Right lobe of liver (tissue), 6 donors: ENCODE measurements at regions of chr16 and their contacts with region 1.

Region 1: GRCh38 chr16:11263737-11264136 is 5.4 kb downstream of the TNP2 start:
- DNase-seq: no peak
- ATAC-seq: no peak
- H3K4me3 ChIP-seq: no peak overlapping the region
- H3K27ac ChIP-seq: no peak overlapping the region
- H3K4me1 ChIP-seq: peaks cover 0 to 9% (median 3%) of the 10 kb centered on the region in 4 donors
- H3K27me3 ChIP-seq: no peaks in the 10 kb centered on the region
- CTCF ChIP-seq: no peak
- POLR2A ChIP-seq: no peak

Region 2: DNA sequence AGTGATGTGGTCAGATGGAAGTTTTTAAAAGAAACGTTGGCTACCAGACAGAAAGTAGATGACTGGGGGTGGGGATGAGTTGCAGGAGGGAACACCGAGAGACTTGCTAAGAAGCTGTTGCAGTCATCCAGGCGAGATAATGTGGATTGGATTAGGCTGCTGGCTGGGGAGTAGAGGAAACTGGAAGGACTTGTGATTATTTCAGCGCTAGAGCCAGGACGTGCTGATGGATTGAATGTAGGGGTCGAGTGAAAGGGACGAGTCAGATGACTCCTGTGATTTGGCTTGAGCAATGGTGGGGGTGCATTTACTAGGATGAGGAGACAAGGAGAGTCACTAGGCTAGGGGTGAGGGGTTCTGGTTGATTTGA is 230.8 kb before region 1 on chr16:
- intact Hi-C with region 1: no loop called
- DNase-seq: no peak
- ATAC-seq: no peak
- H3K4me3 ChIP-seq: no peak overlapping the region
- H3K27ac ChIP-seq: no peak overlapping the region
- H3K4me1 ChIP-seq: peaks cover 0 to 9% (median 0%) of the 10 kb centered on the region in 4 donors
- H3K27me3 ChIP-seq: no peaks in the 10 kb centered on the region
- CTCF ChIP-seq: no peak
- POLR2A ChIP-seq: no peak

Region 3: DNA sequence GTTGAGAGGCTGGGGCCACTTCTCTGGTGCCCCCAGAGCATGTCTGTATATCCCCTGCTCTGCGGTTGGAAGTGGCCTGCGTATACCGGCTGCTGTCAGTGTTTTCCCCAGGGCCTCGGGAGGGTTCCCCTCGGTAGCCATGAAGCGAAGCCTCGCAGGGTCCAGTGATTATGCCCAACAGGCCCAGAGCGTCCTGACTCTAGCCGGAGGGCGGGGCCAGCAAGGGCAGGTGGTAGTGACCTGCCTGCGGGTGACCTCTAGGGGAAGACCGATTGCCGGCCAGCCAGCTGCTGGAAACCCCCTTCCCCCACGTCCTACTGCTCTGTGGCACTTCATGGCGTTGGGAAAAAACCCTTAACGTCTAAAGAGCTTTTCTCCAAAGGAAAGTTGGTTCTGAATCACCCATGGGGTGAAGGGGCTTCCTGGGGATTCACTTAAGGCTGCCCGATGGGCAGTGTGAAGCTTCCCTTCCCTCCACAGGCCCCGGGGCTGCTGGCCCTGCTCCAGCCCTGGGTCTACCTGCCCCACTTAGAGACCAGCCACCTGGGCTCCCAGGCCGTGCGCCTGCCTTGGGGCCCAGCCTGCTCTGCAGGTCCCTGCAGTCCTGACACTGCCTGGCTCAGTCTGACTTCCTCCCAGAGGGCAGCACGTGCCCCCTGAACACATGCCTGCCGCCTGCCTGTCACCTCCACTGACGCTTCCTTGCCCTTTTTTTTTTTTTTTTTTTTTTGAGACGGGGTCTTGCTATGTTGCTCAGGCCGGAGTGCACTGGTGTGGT is 80.5 kb before region 1 on chr16:
- intact Hi-C with region 1: no loop called
- DNase-seq: peak in 1 of 3 donors; percentile 41
- ATAC-seq: peak in 2 of 4 donors; percentile 13 to 55
- H3K4me3 ChIP-seq: no peak overlapping the region
- H3K27ac ChIP-seq: no peak overlapping the region
- H3K4me1 ChIP-seq: no peaks in the 10 kb centered on the region
- H3K27me3 ChIP-seq: no peaks in the 10 kb centered on the region
- CTCF ChIP-seq: peak in 1 of 4 donors; percentile 7
- POLR2A ChIP-seq: no peak

Region 4: GRCh38 chr16:11345040-11345862 is 81.5 kb after region 1 on chr16 and contains the start of gene RMI2:
- intact Hi-C with region 1: loop called in 1 of 2 experiments (anchors 10 kb)
- DNase-seq: peak; percentile 97 to 98 (median 97)
- ATAC-seq: peak; percentile 98 to 99 (median 99)
- H3K4me3 ChIP-seq: peak within 1 kb of the TSS; percentile 33 to 66 (median 52)
- H3K27ac ChIP-seq: no peak within 1 kb of the TSS
- H3K4me1 ChIP-seq: peaks cover 0 to 7% (median 3%) of the 10 kb centered on the region in 4 donors
- H3K27me3 ChIP-seq: no peaks in the 10 kb centered on the region
- CTCF ChIP-seq: no peak
- POLR2A ChIP-seq: peak; percentile 14
- total RNA-seq, gene RMI2: 0.37 to 2.9 (median 1.0) TPM

Region 5: DNA sequence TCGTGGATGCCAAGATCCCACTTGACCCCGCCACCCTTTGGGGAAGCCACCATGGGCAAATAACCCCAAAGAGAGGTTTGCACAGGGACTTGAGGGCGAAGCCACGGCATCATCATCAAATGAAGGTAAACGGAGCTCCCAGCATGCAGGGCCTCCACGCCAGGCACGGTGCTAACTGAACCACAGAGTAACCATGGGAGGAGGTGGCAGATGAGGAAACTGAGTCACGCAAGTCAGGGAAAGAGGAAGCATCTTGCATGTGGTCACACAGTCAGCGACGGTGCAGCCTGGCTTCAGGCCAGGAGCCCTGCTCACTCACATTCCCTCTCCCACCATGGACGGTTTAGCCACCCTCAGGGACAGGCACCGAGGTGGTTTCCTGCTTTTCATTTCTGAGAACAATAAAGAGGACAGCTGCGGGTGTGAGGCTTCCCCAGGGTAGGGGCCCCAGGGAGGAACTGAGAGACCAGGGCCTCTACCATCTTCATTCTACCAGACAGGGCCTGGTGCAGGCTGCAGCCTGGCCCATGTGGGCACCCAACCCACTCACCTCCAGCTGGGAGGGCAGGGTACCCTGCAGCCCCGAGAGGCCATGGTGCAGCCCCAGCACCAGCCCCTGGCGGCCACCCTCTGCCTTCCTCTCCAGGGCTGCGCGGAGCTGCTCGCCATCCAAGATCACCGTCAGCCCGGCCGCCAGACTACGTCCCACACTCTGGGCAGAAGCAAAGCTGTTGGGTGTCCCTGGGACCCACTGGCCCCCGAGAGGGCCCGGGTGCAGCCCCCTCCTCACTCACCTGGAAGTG is 159.8 kb after region 1 on chr16:
- intact Hi-C with region 1: no loop called
- DNase-seq: peak in 1 of 3 donors; percentile 46
- ATAC-seq: peak in 1 of 4 donors; percentile 22
- H3K4me3 ChIP-seq: no peak overlapping the region
- H3K27ac ChIP-seq: no peak overlapping the region
- H3K4me1 ChIP-seq: no peaks in the 10 kb centered on the region
- H3K27me3 ChIP-seq: no peaks in the 10 kb centered on the region
- CTCF ChIP-seq: no peak
- POLR2A ChIP-seq: no peak